Ovary (tissue), 10 donors: ENCODE measurements at regions of chr3 and their contacts with region 1.

Region 1: DNA sequence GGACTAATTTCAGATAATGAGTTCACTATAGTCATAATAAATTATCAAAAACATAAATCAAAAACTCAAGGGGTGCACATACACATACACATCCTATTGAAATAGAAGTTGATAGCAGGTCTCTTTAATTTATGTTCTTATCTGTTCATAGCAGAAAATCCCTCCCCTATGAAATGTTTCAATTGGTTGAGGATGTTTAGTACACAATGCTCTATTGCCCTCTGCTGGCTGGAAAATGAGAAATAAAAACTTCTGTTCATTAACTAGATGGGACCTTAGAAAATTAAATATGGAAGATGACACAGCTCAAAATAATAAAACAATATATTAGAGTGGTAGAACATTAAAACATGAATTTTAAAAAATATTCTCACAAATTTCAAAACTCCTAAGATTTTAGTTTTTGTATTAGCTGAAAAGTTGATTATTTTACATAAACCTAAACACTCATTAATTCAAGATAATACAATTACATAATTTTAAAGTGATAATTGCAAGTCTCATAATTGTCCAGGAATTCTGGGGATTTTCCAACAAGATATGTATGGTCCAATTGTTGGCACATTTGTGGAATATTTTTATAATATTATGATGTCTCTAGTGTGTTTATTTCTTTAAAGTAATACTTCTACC is 735.0 kb downstream of the ROBO1 start:
- DNase-seq: no peak
- H3K4me3 ChIP-seq: no peak overlapping the region
- H3K27ac ChIP-seq: no peak overlapping the region
- H3K4me1 ChIP-seq: no peaks in the 10 kb centered on the region
- H3K27me3 ChIP-seq: no peaks in the 10 kb centered on the region
- CTCF ChIP-seq: peak; percentile 52 to 68 (median 60)
- EP300 ChIP-seq: no peak
- POLR2A ChIP-seq: no peak

Region 2: DNA sequence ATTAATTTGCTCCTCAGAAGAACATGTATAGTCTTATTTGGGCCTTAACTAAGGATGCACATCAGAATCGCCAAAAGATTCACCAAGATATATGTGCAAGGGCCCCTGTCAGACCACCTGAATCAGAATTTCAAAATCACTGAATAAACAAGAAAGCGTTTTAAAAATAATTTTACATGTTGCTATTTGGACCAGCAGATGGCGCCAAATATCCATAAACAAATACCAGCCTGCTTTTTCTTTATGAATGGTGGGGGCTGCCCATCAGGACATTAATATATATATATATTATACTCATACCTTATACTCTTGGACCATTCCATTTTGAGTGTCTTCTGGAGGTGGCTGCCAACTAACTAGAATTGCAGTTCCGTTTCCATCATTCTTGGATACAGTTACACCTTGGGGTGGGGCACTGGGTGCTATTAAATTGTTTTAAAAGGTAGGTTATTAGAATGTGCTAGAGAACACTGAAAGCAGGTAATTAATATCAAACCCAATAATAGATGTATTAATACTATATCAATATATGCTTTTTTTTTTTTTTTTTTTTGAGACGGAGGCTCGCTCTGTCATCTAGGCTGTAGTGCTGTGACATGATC is 373.3 kb before region 1 on chr3:
- intact Hi-C with region 1: loop called (anchors 5 kb)
- DNase-seq: peak in 2 of 5 donors; percentile 34 to 51
- H3K4me3 ChIP-seq: no peak overlapping the region
- H3K27ac ChIP-seq: no peak overlapping the region
- H3K4me1 ChIP-seq: no peaks in the 10 kb centered on the region
- H3K27me3 ChIP-seq: no peaks in the 10 kb centered on the region
- CTCF ChIP-seq: peak; percentile 56 to 61 (median 57)
- EP300 ChIP-seq: no peak
- POLR2A ChIP-seq: no peak

Region 3: DNA sequence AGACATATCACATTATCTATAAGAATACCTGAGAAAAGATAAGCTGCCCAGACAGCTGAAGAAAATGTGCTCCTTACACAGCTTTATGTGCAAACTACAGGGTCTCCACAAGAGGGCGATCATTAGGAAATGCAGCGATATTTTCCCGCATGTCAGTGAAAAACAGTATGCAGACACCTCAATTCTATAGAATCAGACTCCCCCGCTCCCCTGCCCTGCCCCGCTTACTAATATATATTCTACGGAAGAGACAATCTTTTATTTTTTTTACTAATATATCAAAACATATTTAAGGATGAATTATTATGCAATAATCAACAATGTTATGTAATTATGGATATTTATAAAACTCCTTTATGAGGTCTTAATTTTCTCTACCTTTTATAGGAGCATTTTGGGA is 53.7 kb after region 1 on chr3:
- intact Hi-C with region 1: no loop called
- DNase-seq: peak in 2 of 5 donors; percentile 13 to 14
- H3K4me3 ChIP-seq: no peak overlapping the region
- H3K27ac ChIP-seq: no peak overlapping the region
- H3K4me1 ChIP-seq: no peaks in the 10 kb centered on the region
- H3K27me3 ChIP-seq: no peaks in the 10 kb centered on the region
- CTCF ChIP-seq: peak in 1 of 3 donors; percentile 11
- EP300 ChIP-seq: no peak
- POLR2A ChIP-seq: no peak